Naive thymus-derived CD4-positive, alpha-beta T cell (primary cell): ENCODE measurements at regions of chr4 and their contacts with region 1.

Region 1: GRCh38 chr4:86934771-86935565 is at the start of gene AFF1:
- DNase-seq: peak; percentile 74 to 91 (median 81)
- ATAC-seq: peak; percentile 90
- H3K4me3 ChIP-seq: peak within 1 kb of the TSS; percentile 91
- H3K4me3 Mint-ChIP-seq: peak within 1 kb of the TSS; percentile 92 to 97 (median 94)
- H3K27ac ChIP-seq: peak within 1 kb of the TSS; percentile 90
- H3K27ac Mint-ChIP-seq: peak within 1 kb of the TSS; percentile 91 to 97 (median 96)
- H3K4me1 ChIP-seq: peaks cover 29% of the 10 kb centered on the region in 2 donors
- H3K4me1 Mint-ChIP-seq: peaks cover 37 to 61% (median 53%) of the 10 kb centered on the region in 7 donors
- H3K27me3 ChIP-seq: no peaks in the 10 kb centered on the region
- H3K27me3 Mint-ChIP-seq: no peaks in the 10 kb centered on the region
- total RNA-seq, gene AFF1: 65.8 to 88.6 (median 78.7) TPM

Region 2: DNA sequence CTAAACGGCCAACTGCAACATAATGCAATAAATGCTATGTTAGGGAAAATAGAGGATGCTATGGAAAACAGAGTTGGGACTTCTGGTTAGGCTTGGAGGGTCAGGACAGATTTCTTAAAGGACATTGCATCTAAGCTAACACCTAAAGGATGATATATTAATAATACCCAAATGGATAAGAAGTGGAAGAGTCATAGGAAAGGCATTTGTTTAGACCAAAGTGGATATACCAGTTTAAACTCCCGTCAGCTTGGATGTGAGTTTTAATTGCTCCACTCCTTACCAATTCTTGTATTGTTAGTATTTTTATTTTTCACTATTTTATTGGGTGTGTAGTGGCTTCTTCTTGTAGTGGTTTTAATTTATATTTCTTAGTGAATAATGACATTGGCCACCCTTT is 246.9 kb before region 1 on chr4:
- CTCF ChIA-PET with region 1: no interaction called
- POLR2A ChIA-PET with region 1: no interaction called
- intact Hi-C with region 1: no loop called
- DNase-seq: no peak
- ATAC-seq: no peak
- H3K4me3 ChIP-seq: no peak overlapping the region
- H3K4me3 Mint-ChIP-seq: no peak overlapping the region
- H3K27ac ChIP-seq: no peak overlapping the region
- H3K27ac Mint-ChIP-seq: no peak overlapping the region
- H3K4me1 ChIP-seq: no peaks in the 10 kb centered on the region
- H3K4me1 Mint-ChIP-seq: no peaks in the 10 kb centered on the region
- H3K27me3 ChIP-seq: no peaks in the 10 kb centered on the region
- H3K27me3 Mint-ChIP-seq: peaks cover 0 to 6% (median 2%) of the 10 kb centered on the region in 5 donors

Region 3: DNA sequence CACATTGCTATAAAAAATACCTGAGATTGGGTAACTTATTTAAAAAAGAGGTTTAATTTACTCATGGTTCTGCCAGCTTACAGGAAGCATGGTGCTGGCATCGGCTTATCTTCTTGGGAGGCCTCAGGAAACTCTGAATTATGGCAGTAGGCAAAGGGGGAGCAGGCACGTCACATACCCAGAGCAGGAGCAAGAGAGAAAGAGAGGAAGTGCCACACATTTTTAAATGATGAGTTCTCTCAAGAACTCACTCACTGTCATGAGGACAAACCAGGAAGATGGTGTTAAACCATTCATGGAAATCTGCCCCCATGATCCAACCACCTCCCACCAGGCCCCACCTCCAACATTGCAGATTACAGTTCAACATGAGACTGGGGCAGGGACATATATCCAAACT is 10.2 kb before region 1 on chr4:
- CTCF ChIA-PET with region 1: interaction called, 8 read pairs
- POLR2A ChIA-PET with region 1: interaction called, 19 read pairs
- intact Hi-C with region 1: loop called (anchors 1 kb)
- DNase-seq: no peak
- ATAC-seq: no peak
- H3K4me3 ChIP-seq: no peak overlapping the region
- H3K4me3 Mint-ChIP-seq: no peak overlapping the region
- H3K27ac ChIP-seq: no peak overlapping the region
- H3K27ac Mint-ChIP-seq: peak overlapping the region in 3 of 9 donors; percentile 8 to 50 (median 32)
- H3K4me1 ChIP-seq: no peaks in the 10 kb centered on the region
- H3K4me1 Mint-ChIP-seq: peaks cover 0 to 25% (median 5%) of the 10 kb centered on the region in 7 donors
- H3K27me3 ChIP-seq: no peaks in the 10 kb centered on the region
- H3K27me3 Mint-ChIP-seq: no peaks in the 10 kb centered on the region

Region 4: DNA sequence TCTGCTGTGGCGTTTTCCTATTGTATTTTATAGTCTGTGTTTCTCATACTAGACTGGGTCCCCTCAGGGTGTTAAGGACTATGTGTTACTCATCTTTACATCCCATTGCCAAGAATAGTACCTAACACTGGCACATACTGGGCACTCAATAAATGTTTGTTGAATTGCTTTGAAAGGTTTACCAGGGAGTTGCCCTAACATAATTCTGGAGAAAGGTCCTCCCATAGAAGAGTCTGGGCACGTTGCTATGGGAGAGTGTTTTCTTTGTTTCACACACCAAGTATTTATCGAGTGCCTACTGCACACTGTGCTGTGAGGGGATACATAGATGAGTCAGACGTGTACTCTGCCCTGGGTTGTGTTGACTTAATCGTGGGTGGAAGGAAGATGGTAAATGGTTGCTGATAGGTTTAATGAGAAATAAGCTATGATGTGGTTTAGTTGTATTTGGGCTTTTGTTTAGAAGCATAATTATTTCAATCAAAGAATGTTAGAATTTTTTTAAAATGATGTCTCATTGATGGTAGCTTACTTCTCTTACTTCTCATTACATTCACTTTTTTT is 42.7 kb after region 1 on chr4:
- CTCF ChIA-PET with region 1: no interaction called
- POLR2A ChIA-PET with region 1: no interaction called
- intact Hi-C with region 1: loop called (anchors 2 to 5 kb)
- DNase-seq: no peak
- ATAC-seq: no peak
- H3K4me3 ChIP-seq: no peak overlapping the region
- H3K4me3 Mint-ChIP-seq: no peak overlapping the region
- H3K27ac ChIP-seq: no peak overlapping the region
- H3K27ac Mint-ChIP-seq: peak overlapping the region in 3 of 9 donors; percentile 18 to 72 (median 66)
- H3K4me1 ChIP-seq: peaks cover 0 to 11% of the 10 kb centered on the region in 2 donors
- H3K4me1 Mint-ChIP-seq: peaks cover 36 to 88% (median 60%) of the 10 kb centered on the region in 7 donors
- H3K27me3 ChIP-seq: no peaks in the 10 kb centered on the region
- H3K27me3 Mint-ChIP-seq: no peaks in the 10 kb centered on the region

Region 5: GRCh38 chr4:87103691-87104187 is 168.8 kb after region 1 on chr4:
- CTCF ChIA-PET with region 1: interaction called, 4 read pairs
- POLR2A ChIA-PET with region 1: interaction called, 4 read pairs
- intact Hi-C with region 1: loop called in 1 of 2 experiments (anchors 2 kb)
- DNase-seq: peak in 7 of 9 donors; percentile 45 to 83 (median 64)
- ATAC-seq: peak; percentile 87
- H3K4me3 ChIP-seq: no peak overlapping the region
- H3K4me3 Mint-ChIP-seq: peak overlapping the region; percentile 24 to 81 (median 69)
- H3K27ac ChIP-seq: peak overlapping the region; percentile 56
- H3K27ac Mint-ChIP-seq: peak overlapping the region; percentile 65 to 99 (median 92)
- H3K4me1 ChIP-seq: peaks cover 13 to 23% of the 10 kb centered on the region in 2 donors
- H3K4me1 Mint-ChIP-seq: peaks cover 26 to 75% (median 60%) of the 10 kb centered on the region in 7 donors
- H3K27me3 ChIP-seq: no peaks in the 10 kb centered on the region
- H3K27me3 Mint-ChIP-seq: no peaks in the 10 kb centered on the region

Region 6: DNA sequence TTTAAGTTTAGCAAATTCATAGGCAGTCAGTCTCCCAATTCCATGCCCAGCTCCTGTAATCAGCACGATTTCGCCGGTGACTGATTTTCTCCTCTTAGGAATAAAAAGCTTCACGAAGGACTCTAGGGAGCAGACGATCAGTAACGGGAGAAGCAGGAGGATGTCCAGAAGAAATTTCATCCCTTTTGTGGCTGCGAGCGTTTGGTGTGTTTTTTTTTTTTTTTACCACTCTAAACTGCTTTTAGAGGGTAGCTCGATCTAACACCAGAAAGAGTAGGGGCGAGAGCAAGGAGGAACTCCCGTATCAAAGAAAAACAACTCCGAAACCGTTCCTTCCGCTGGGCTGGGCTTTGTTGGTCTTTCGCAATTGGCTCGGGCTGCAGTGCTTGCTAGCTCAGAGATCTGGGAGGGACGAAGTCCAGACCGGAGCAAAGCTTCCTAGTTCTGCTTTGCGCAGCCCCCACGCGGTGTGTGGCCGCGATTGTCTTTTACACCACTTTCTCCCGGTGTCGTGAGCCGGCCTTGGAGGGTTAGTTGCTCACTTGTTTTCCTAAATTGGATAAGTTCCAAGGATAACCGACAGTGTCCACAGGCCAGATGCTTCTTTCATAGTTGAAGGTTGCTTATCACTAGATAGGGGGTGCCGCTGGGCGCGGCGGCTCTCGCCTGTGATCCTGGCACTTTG is 456.1 kb after region 1 on chr4 and contains the start of gene HSD17B11:
- CTCF ChIA-PET with region 1: no interaction called
- POLR2A ChIA-PET with region 1: interaction called, 7 read pairs
- intact Hi-C with region 1: loop called (anchors 1 to 10 kb)
- DNase-seq: peak; percentile 44 to 83 (median 79)
- ATAC-seq: peak; percentile 99
- H3K4me3 ChIP-seq: peak within 1 kb of the TSS; percentile 85
- H3K4me3 Mint-ChIP-seq: peak within 1 kb of the TSS; percentile 87 to 99 (median 97)
- H3K27ac ChIP-seq: peak within 1 kb of the TSS; percentile 82
- H3K27ac Mint-ChIP-seq: peak within 1 kb of the TSS; percentile 83 to 96 (median 94)
- H3K4me1 ChIP-seq: peaks cover 10 to 17% of the 10 kb centered on the region in 2 donors
- H3K4me1 Mint-ChIP-seq: peaks cover 32 to 66% (median 57%) of the 10 kb centered on the region in 7 donors
- H3K27me3 ChIP-seq: no peaks in the 10 kb centered on the region
- H3K27me3 Mint-ChIP-seq: peaks cover 0 to 14% (median 0%) of the 10 kb centered on the region in 5 donors
- total RNA-seq, gene HSD17B11: 34.3 to 74.4 (median 61.0) TPM

Region 7: DNA sequence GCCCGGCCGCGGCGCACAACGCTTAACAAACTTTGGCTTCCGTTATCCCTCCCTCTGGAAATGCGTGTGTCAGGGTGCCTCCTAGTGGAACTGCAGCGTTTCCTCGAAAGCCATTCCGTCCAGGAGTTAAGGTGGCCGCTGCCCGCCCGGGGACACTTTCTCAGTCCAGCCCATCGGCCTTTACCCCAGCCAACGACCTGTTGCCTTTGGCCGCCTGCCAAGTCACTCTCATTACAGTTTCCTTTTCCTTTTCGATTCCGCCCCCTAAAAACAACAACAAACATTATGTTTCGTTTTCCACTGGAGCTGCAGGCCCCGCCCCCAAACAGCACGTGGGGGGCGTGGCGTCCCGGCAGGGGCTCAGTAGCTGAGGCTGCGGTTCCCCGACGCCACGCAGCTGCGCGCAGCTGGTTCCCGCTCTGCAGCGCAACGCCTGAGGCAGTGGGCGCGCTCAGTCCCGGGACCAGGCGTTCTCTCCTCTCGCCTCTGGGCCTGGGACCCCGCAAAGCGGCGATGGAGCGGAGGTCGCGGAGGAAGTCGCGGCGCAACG is 1521.9 kb after region 1 on chr4 and contains the start of gene HERC5:
- CTCF ChIA-PET with region 1: no interaction called
- POLR2A ChIA-PET with region 1: no interaction called
- intact Hi-C with region 1: loop called in 1 of 2 experiments (anchors 5 kb)
- DNase-seq: peak; percentile 90 to 94 (median 92)
- ATAC-seq: peak; percentile 98
- H3K4me3 ChIP-seq: peak within 1 kb of the TSS; percentile 100
- H3K4me3 Mint-ChIP-seq: peak within 1 kb of the TSS; percentile 87 to 100 (median 98)
- H3K27ac ChIP-seq: peak within 1 kb of the TSS; percentile 72
- H3K27ac Mint-ChIP-seq: peak within 1 kb of the TSS; percentile 94 to 100 (median 99)
- H3K4me1 ChIP-seq: peaks cover 5 to 6% of the 10 kb centered on the region in 2 donors
- H3K4me1 Mint-ChIP-seq: peaks cover 10 to 52% (median 37%) of the 10 kb centered on the region in 7 donors
- H3K27me3 ChIP-seq: no peaks in the 10 kb centered on the region
- H3K27me3 Mint-ChIP-seq: no peaks in the 10 kb centered on the region
- total RNA-seq, gene HERC5: 11.8 to 52.5 (median 14.1) TPM